Aorta (tissue), 5 donors: ENCODE measurements at regions of chr7 and their contacts with region 1.

Region 1: GRCh38 chr7:24819916-24820689 is 62.8 kb upstream of the GSDME start:
- DNase-seq: peak; percentile 84 to 86
- ATAC-seq: peak; percentile 91
- H3K4me3 ChIP-seq: no peak overlapping the region
- H3K27ac ChIP-seq: no peak overlapping the region
- H3K4me1 ChIP-seq: no peaks in the 10 kb centered on the region
- H3K27me3 ChIP-seq: no peaks in the 10 kb centered on the region

Region 2: DNA sequence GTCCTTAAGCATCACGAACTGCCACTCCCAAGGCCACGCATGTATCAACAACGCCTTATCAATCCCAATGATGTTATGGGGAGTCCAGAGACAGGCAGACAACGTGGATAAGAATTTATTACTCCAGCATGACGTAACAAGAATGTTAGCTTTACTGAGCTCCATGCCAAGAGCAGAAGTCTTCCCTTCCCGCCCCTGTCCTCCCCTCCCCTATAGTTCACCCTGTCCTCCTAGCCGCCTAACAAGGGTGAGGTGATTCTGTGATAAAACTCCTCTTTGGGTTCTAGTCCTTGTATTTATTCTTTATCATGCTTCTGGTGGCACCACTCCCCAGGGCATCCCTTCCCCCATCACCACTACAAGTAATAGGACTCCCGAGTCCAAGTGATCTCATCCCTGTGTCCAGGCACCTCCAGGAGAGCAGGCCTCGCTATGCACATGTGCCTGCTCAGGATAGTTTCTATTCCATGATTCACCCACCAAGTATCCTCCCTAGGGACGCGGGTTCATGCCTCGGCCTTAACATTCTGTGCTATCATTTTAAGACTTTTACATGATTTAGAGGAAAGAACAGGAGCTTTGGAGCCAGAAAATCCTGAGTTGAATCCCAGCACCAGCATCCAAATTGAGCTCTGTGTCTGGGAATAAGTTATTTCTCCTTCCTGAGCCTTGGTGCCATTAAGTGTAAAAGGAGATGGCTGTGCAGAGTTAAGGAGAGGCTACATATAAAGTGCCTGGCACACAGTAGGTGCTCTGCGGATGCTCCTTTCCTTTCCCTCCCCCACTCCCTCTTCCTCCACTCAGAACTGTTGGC is 78.2 kb before region 1 on chr7:
- intact Hi-C with region 1: no loop called
- DNase-seq: peak in 1 of 2 donors; percentile 68
- ATAC-seq: peak; percentile 88
- H3K4me3 ChIP-seq: no peak overlapping the region
- H3K27ac ChIP-seq: no peak overlapping the region
- H3K4me1 ChIP-seq: no peaks in the 10 kb centered on the region
- H3K27me3 ChIP-seq: no peaks in the 10 kb centered on the region

Region 3: GRCh38 chr7:24979863-24980533 is 159.9 kb after region 1 on chr7 and contains the start of gene OSBPL3:
- intact Hi-C with region 1: loop called in 1 of 2 experiments (anchors 5 kb)
- DNase-seq: peak; percentile 97
- ATAC-seq: peak; percentile 98
- H3K4me3 ChIP-seq: peak within 1 kb of the TSS; percentile 83 to 90
- H3K27ac ChIP-seq: peak within 1 kb of the TSS in 1 of 2 donors; percentile 65
- H3K4me1 ChIP-seq: no peaks in the 10 kb centered on the region
- H3K27me3 ChIP-seq: no peaks in the 10 kb centered on the region
- total RNA-seq, gene OSBPL3: 8.3 to 15.6 TPM

Region 4: GRCh38 chr7:25069900-25070443 is 249.9 kb after region 1 on chr7:
- intact Hi-C with region 1: loop called (anchors 2 to 5 kb)
- DNase-seq: no peak
- ATAC-seq: peak; percentile 86
- H3K4me3 ChIP-seq: no peak overlapping the region
- H3K27ac ChIP-seq: no peak overlapping the region
- H3K4me1 ChIP-seq: no peaks in the 10 kb centered on the region
- H3K27me3 ChIP-seq: no peaks in the 10 kb centered on the region